Posterior cingulate gyrus (tissue), 11 donors: ENCODE measurements at regions of chr12 and their contacts with region 1.

Region 1: DNA sequence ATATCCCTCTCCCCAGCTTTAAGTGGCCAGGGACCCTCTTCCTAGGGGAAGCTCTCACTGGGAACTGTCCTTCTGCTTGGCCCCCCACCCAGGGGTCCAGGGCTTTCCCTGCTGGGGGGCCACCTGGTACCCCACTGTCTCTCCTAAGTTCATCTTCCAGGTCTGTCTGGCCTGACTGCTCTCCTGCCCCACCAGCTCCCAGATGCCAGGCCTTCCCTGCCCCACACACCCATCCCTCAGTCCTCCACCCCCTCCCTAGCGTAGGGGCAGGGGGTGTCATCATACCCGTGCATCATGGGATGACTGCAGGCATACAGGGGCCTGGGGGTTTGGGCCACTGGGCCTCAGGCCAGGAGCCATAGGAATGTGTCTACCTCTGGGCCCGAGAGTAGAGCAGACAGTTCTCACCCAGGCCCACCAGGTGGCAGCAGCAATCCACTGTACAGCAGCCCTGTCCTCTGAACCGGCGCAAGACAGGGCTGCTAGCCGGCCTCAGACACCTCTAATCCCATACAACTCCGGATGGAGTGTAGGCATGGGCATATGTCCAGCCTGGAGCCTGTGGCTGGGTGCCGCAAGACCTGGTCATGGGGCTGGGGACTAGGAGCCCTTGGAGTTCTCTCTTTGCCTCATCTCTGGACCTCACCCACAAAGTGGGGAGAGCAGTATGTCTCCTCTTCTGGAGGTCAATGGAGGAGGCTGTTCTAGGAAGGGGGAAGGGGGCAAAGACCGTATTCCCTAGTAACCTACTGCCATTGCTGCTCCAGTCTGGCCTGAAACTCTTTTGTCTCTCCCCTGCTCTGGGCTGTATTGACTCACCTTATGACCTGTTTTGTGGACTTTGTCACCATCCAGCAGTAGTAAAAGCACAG is 10.0 kb upstream of the SMARCD1 start:
- DNase-seq: peak; percentile 62 to 98 (median 84)

Region 2: GRCh38 chr12:49866859-49867579 is 208.2 kb before region 1 on chr12:
- intact Hi-C with region 1: loop called (anchors 5 kb)
- DNase-seq: peak; percentile 43 to 95 (median 79)

Region 3: GRCh38 chr12:49967042-49967776 is 108.0 kb before region 1 on chr12:
- intact Hi-C with region 1: loop called (anchors 1 kb)
- DNase-seq: peak; percentile 84 to 99 (median 96)

Region 4: GRCh38 chr12:50043854-50044253 is 31.3 kb before region 1 on chr12:
- intact Hi-C with region 1: loop called (anchors 1 kb)
- DNase-seq: no peak

Region 5: GRCh38 chr12:50174971-50175715 is 100.0 kb after region 1 on chr12:
- intact Hi-C with region 1: loop called (anchors 1 kb)
- DNase-seq: no peak